AG04450 (cell line): ENCODE measurements at regions of chr3 and their contacts with region 1.

Region 1: GRCh38 chr3:32177702-32178198 is 60.7 kb upstream of the CMTM8 start:
- DNase-seq: peak; percentile 0
- H3K4me3 ChIP-seq: no peak overlapping the region
- H3K27ac ChIP-seq: no peak overlapping the region
- H3K27me3 ChIP-seq: peaks cover 9% of the 10 kb centered on the region
- CTCF ChIP-seq: peak; percentile 69

Region 2: GRCh38 chr3:32166654-32167053 is 11.1 kb before region 1 on chr3:
- CTCF ChIA-PET with region 1: interaction called, 11 read pairs
- POLR2A ChIA-PET with region 1: no interaction called
- DNase-seq: no peak
- H3K4me3 ChIP-seq: no peak overlapping the region
- H3K27ac ChIP-seq: no peak overlapping the region
- H3K27me3 ChIP-seq: no peaks in the 10 kb centered on the region
- CTCF ChIP-seq: no peak

Region 3: GRCh38 chr3:32340039-32340438 is 162.3 kb after region 1 on chr3:
- CTCF ChIA-PET with region 1: interaction called, 10 read pairs
- POLR2A ChIA-PET with region 1: no interaction called
- DNase-seq: no peak
- H3K4me3 ChIP-seq: no peak overlapping the region
- H3K27ac ChIP-seq: no peak overlapping the region
- H3K27me3 ChIP-seq: no peaks in the 10 kb centered on the region
- CTCF ChIP-seq: peak; percentile 54